ENCODE measurements at regions of chr21 and their contacts with region 1.

Region 1: GRCh38 chr21:41068967-41069642 is 98.9 kb upstream of the BACE2 start:
- DNase-seq: peak; percentile 38
- H3K4me3 Mint-ChIP-seq: peak overlapping the region; percentile 43
- H3K27ac Mint-ChIP-seq: no peak overlapping the region
- H3K4me1 Mint-ChIP-seq: peaks cover 6% of the 10 kb centered on the region
- H3K27me3 Mint-ChIP-seq: peaks cover 14% of the 10 kb centered on the region

Region 2: GRCh38 chr21:40143822-40144525 is 925.1 kb before region 1 on chr21:
- intact Hi-C with region 1: loop called (anchors 2 kb)
- DNase-seq: no peak
- H3K4me3 Mint-ChIP-seq: no peak overlapping the region
- H3K27ac Mint-ChIP-seq: no peak overlapping the region
- H3K4me1 Mint-ChIP-seq: no peaks in the 10 kb centered on the region
- H3K27me3 Mint-ChIP-seq: no peaks in the 10 kb centered on the region